ENCODE measurements at regions of chr3 and their contacts with region 1.

Region 1: DNA sequence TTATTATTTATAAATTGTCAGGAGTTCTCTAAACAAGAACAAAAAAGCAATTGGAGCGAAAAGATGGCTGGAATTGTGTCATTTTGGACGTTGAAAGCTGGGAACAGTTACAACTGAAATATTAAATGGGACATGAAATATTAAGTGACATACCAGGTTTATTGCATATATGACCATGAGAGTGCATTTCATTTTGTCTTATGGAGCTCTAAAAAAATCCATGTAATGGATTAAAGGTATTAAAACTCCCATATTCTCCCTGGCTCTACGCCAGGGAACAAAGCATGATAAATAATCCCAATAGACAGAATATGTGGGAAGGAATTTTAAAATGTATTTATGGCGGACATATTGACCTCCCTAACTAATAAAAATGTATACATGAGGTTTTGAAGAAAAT is 17.7 kb downstream of the RARB start:
- DNase-seq: no peak

Region 2: GRCh38 chr3:25178672-25179071 is 267.1 kb before region 1 on chr3:
- intact Hi-C with region 1: no loop called
- DNase-seq: no peak

Region 3: DNA sequence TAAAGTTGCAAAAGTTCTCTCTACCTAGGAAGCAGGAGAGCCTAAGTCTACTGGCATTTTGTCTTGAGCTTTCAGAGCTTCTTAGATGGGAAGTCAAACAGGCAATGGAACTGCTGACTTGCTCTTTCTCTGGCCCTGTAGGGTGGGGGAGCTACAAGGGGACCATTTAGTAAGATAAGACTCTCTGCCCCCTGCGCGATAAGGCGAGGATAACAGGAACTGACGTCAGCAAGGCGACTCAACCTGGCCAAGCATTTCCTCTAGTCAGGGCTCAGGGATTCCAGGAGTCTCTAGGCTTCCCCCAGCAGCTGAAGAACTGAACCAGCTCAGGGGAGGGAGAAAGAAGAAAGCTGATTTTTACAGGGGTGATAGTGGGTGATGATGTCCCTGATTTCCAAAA is 11.9 kb before region 1 on chr3:
- intact Hi-C with region 1: loop called (anchors 1 kb)
- DNase-seq: peak in 12 of 42 donors; percentile 26 to 60 (median 32)

Measured in head of caudate nucleus (tissue), 42 donors.